ENCODE measurements at regions of chr1 and their contacts with region 1.

Region 1: DNA sequence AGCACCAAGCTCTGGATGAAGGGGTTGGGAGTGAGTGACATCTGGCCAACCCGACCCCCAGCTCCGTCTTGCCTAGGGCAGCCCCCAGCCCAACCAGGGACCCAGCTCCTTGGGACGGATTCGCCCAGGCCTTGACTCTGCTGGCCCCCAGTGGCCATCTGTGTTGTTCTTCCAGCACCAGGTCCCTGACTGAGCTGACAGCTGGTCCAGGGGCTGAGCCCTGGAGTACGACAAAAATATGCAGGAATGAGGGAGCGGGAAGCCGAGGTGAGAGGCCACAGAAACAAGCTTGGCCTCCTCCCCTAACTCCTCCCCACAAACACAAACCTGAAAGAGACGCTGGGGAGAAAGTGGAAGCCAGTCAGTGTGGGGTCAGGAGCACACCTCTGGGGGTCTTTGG is 55.0 kb upstream of the PAX7 start:
- DNase-seq: peak; percentile 94
- ATAC-seq: peak; percentile 95
- H3K4me3 Mint-ChIP-seq: no peak overlapping the region
- H3K27ac Mint-ChIP-seq: no peak overlapping the region
- H3K4me1 Mint-ChIP-seq: peaks cover 9% of the 10 kb centered on the region
- H3K27me3 Mint-ChIP-seq: peaks cover 2% of the 10 kb centered on the region; the same call in 1 of the 2 replicates
- CTCF ChIP-seq: peak; percentile 77

Region 2: DNA sequence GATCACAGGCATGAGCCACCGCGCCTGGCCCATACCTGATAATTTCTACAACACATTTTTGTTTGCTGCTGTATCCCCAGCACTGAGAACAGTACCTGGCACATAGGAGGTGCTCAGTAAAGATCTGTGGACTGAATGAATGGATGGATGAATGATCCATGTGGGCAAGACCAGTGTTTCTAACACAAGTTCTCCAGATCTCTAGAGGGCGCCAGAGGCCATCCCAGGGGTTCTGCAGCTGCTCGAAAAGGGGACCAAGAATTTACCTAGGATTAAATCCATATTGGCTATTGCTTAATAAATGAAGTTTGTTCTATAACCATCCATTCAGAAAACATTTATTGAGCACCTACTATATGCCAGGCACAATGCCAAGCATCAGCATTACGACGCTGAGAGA is 652.8 kb before region 1 on chr1:
- CTCF ChIA-PET with region 1: interaction called, 22 read pairs
- POLR2A ChIA-PET with region 1: no interaction called
- DNase-seq: peak; percentile 72
- ATAC-seq: peak; percentile 59
- H3K4me3 Mint-ChIP-seq: no peak overlapping the region
- H3K27ac Mint-ChIP-seq: no peak overlapping the region
- H3K4me1 Mint-ChIP-seq: peaks cover 6% of the 10 kb centered on the region
- H3K27me3 Mint-ChIP-seq: peaks cover 6% of the 10 kb centered on the region
- CTCF ChIP-seq: peak; percentile 48

Region 3: GRCh38 chr1:18322368-18323032 is 253.1 kb before region 1 on chr1:
- CTCF ChIA-PET with region 1: interaction called, 48 read pairs
- POLR2A ChIA-PET with region 1: no interaction called
- DNase-seq: peak; percentile 66
- ATAC-seq: peak; percentile 67
- H3K4me3 Mint-ChIP-seq: no peak overlapping the region
- H3K27ac Mint-ChIP-seq: no peak overlapping the region
- H3K4me1 Mint-ChIP-seq: peaks cover 29% of the 10 kb centered on the region
- H3K27me3 Mint-ChIP-seq: peaks cover 38% of the 10 kb centered on the region
- CTCF ChIP-seq: peak; percentile 75

Region 4: GRCh38 chr1:18396247-18396980 is 179.2 kb before region 1 on chr1:
- CTCF ChIA-PET with region 1: interaction called, 39 read pairs
- POLR2A ChIA-PET with region 1: interaction called, 3 read pairs
- DNase-seq: no peak
- ATAC-seq: no peak
- H3K4me3 Mint-ChIP-seq: no peak overlapping the region
- H3K27ac Mint-ChIP-seq: no peak overlapping the region
- H3K4me1 Mint-ChIP-seq: peaks cover 23% of the 10 kb centered on the region
- H3K27me3 Mint-ChIP-seq: no peaks in the 10 kb centered on the region; the same call in none of the 2 replicates
- CTCF ChIP-seq: no peak

Region 5: GRCh38 chr1:18480315-18481189 is 95.1 kb before region 1 on chr1 and contains the start of gene KLHDC7A:
- CTCF ChIA-PET with region 1: interaction called, 25 read pairs
- POLR2A ChIA-PET with region 1: interaction called, 3 read pairs
- DNase-seq: peak; percentile 85
- ATAC-seq: peak; percentile 91
- H3K4me3 Mint-ChIP-seq: peak within 1 kb of the TSS; percentile 36
- H3K27ac Mint-ChIP-seq: peak within 1 kb of the TSS; percentile 94
- H3K4me1 Mint-ChIP-seq: peaks cover 49% of the 10 kb centered on the region
- H3K27me3 Mint-ChIP-seq: no peaks in the 10 kb centered on the region; the same call in 1 of the 2 replicates
- CTCF ChIP-seq: no peak
- total RNA-seq, gene KLHDC7A: 10.9 to 14.3 TPM (median 11.0 TPM) in 3 replicates

Region 6: DNA sequence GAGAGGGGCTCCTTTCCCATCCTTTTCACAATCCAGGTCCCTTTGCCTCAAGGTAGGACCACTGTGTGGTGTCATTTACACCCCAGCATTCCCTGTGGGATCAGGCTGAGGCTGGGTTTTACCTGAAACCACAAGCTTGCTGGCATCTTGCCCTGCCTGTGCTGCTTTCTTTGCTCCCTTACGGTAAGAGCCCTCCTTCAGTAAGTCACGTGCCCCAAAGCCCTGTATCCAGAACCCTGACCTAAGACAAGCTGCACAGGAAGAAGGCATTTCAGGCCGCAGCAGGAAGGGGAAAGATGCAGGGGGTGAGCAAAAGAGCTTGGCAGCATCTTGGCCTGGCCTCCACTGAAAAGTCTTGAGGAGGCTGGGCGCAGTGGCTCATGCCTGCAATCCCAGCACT is 36.4 kb before region 1 on chr1:
- CTCF ChIA-PET with region 1: interaction called, 20 read pairs
- POLR2A ChIA-PET with region 1: no interaction called
- DNase-seq: no peak
- ATAC-seq: no peak
- H3K4me3 Mint-ChIP-seq: no peak overlapping the region
- H3K27ac Mint-ChIP-seq: no peak overlapping the region
- H3K4me1 Mint-ChIP-seq: peaks cover 18% of the 10 kb centered on the region
- H3K27me3 Mint-ChIP-seq: peaks cover 65% of the 10 kb centered on the region
- CTCF ChIP-seq: no peak

Region 7: GRCh38 chr1:18653367-18653766 is 77.7 kb after region 1 on chr1:
- CTCF ChIA-PET with region 1: no interaction called
- POLR2A ChIA-PET with region 1: no interaction called
- DNase-seq: no peak
- ATAC-seq: no peak
- H3K4me3 Mint-ChIP-seq: no peak overlapping the region
- H3K27ac Mint-ChIP-seq: no peak overlapping the region
- H3K4me1 Mint-ChIP-seq: peaks cover 83% of the 10 kb centered on the region
- H3K27me3 Mint-ChIP-seq: peaks cover 98% of the 10 kb centered on the region
- CTCF ChIP-seq: no peak

Measured in WTC11 (cell line).